Naive thymus-derived CD8-positive, alpha-beta T cell (primary cell): ENCODE measurements at regions of chr16 and their contacts with region 1.

Region 1: DNA sequence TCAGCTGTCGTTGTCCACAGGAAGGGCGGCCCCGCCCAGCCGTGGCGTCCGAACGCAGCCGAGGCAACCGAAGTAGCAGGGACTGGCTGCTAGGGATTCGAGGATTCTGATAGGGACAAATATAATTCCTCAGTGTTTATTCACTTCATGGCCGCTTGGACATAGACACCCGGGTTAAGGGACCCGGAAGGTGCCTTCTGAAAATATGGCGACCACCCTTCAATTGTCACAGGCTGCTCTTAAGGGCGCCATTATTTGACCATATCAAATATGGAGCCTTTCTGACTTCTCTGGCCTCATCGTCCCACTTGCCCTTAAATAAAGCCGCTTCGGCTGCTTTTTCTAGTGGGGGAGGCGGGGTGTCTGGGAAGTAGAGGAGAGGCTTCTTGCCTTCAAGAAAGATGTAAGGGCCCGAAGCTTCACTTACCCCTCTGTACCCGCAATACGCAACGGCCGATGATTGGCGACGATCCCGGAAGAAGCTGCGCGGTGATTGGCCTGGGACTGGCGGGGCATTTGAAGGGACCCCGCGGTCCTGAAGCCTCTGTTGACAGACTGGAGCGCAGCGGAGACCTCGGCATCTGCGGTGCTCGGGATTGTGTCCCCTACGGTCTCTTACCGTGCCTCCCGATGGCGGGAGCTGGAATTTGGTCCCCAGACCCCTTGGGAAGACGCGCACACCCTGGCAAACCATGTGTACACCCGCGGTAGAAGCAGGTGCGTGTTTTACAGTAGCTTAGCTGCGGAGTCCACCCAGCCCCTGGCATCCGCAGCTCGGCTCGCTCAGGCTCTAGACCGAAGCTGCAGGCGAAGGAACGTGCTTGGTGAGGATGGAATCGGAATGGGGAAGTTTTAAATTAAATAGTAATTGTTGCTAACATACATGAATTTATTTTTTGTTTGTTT is at the start of gene ZNF688:
- DNase-seq: peak; percentile 84 to 99 (median 96)
- ATAC-seq: peak; percentile 83 to 86
- H3K4me3 Mint-ChIP-seq: peak within 1 kb of the TSS; percentile 82 to 95 (median 92)
- H3K27ac Mint-ChIP-seq: peak within 1 kb of the TSS; percentile 93 to 99 (median 98)
- H3K4me1 Mint-ChIP-seq: peaks cover 17 to 52% (median 33%) of the 10 kb centered on the region in 4 donors
- H3K27me3 Mint-ChIP-seq: no peaks in the 10 kb centered on the region
- polyA plus RNA-seq, gene ZNF688: 21.2 to 22.0 (median 21.7) TPM

Region 2: DNA sequence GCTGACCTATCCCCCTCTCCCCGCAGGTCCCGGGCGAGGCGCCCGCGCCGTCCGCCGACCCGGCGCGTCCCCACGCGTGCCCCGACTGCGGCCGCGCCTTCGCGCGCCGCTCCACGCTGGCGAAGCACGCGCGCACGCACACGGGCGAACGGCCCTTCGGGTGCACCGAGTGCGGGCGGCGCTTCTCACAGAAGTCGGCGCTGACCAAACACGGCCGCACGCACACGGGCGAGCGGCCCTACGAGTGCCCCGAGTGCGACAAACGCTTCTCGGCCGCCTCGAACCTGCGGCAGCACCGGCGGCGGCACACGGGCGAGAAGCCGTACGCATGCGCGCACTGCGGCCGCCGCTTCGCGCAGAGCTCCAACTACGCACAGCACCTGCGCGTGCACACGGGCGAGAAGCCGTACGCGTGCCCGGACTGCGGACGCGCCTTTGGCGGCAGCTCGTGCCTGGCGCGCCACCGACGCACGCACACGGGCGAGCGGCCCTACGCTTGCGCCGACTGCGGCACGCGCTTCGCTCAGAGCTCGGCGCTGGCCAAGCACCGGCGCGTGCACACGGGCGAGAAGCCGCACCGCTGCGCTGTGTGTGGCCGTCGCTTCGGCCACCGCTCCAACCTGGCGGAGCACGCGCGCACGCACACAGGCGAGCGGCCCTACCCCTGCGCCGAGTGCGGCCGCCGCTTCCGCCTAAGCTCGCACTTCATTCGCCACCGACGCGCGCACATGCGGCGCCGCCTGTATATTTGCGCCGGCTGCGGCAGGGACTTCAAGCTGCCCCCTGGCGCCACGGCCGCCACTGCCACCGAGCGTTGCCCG is 154.2 kb before region 1 on chr16:
- POLR2A ChIA-PET with region 1: interaction called, 11 read pairs
- DNase-seq: peak; percentile 82 to 94 (median 88)
- ATAC-seq: peak; percentile 80 to 85
- H3K4me3 Mint-ChIP-seq: peak overlapping the region; percentile 22 to 83 (median 72)
- H3K27ac Mint-ChIP-seq: peak overlapping the region in 8 of 10 donors; percentile 15 to 91 (median 83)
- H3K4me1 Mint-ChIP-seq: peaks cover 8 to 17% (median 11%) of the 10 kb centered on the region in 4 donors
- H3K27me3 Mint-ChIP-seq: no peaks in the 10 kb centered on the region

Region 3: GRCh38 chr16:30526823-30527635 is 44.9 kb before region 1 on chr16:
- POLR2A ChIA-PET with region 1: interaction called, 14 read pairs
- DNase-seq: peak; percentile 64 to 92 (median 72)
- ATAC-seq: peak; percentile 71 to 82
- H3K4me3 Mint-ChIP-seq: peak overlapping the region; percentile 82 to 95 (median 90)
- H3K27ac Mint-ChIP-seq: peak overlapping the region; percentile 90 to 96 (median 94)
- H3K4me1 Mint-ChIP-seq: peaks cover 10 to 40% (median 23%) of the 10 kb centered on the region in 4 donors
- H3K27me3 Mint-ChIP-seq: no peaks in the 10 kb centered on the region

Region 4: GRCh38 chr16:30551781-30552180 is 20.2 kb before region 1 on chr16:
- POLR2A ChIA-PET with region 1: interaction called, 131 read pairs
- DNase-seq: peak in 9 of 10 donors; percentile 32 to 70 (median 54)
- ATAC-seq: peak; percentile 86 to 90
- H3K4me3 Mint-ChIP-seq: peak overlapping the region; percentile 46 to 85 (median 74)
- H3K27ac Mint-ChIP-seq: peak overlapping the region; percentile 57 to 96 (median 93)
- H3K4me1 Mint-ChIP-seq: peaks cover 18 to 55% (median 51%) of the 10 kb centered on the region in 4 donors
- H3K27me3 Mint-ChIP-seq: no peaks in the 10 kb centered on the region

Region 5: GRCh38 chr16:30585400-30586189 is 13.6 kb after region 1 on chr16 and contains the start of gene ZNF785:
- POLR2A ChIA-PET with region 1: interaction called, 38 read pairs
- DNase-seq: peak; percentile 75 to 97 (median 92)
- ATAC-seq: peak; percentile 99 to 100
- H3K4me3 Mint-ChIP-seq: peak within 1 kb of the TSS; percentile 82 to 96 (median 90)
- H3K27ac Mint-ChIP-seq: peak within 1 kb of the TSS; percentile 83 to 95 (median 92)
- H3K4me1 Mint-ChIP-seq: peaks cover 9 to 48% (median 28%) of the 10 kb centered on the region in 4 donors
- H3K27me3 Mint-ChIP-seq: peaks cover 0 to 1% (median 0%) of the 10 kb centered on the region in 5 donors
- polyA plus RNA-seq, gene ZNF785: 1.6 to 3.5 (median 3.4) TPM

Region 6: DNA sequence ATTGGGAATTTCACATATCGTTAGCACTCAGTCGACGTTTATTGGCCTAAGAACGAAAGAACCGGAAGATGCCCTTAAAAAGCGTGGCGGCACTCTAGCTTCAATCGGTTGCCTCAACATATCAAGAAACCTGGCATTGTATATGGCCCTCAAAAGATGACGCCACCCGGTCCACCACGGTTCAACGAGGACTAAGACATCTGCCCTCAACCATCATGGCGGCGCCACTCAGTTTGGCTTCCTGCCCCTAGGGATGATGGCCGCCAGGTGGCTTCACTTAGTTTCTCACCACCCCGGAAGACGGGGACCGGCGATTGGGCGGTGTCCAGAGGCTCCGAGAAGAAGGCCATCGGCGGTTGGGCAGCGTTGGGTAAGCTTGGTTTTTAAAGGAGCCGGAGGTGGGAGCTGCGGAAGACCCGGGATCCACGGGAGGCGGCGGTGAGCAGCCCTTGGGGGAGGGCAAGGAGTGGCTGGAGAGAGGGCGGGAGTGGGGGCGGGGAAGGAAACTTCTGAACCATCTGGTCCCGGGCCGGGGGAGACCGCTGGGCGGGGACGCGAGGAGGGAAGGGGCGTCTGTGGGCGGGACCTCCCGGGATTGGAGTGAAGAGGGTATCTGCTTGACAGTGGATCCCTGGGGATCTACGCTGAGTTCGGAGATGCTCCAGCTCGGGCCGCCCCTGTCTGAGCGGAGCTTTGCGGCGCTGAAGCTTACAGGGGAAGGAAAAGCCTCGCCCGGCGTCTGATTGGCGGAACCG is 78.6 kb after region 1 on chr16 and contains the start of gene PRR14:
- POLR2A ChIA-PET with region 1: interaction called, 26 read pairs
- DNase-seq: peak; percentile 87 to 99 (median 96)
- ATAC-seq: peak; percentile 87 to 90
- H3K4me3 Mint-ChIP-seq: peak within 1 kb of the TSS; percentile 97 to 100 (median 99)
- H3K27ac Mint-ChIP-seq: peak within 1 kb of the TSS; percentile 95 to 100 (median 98)
- H3K4me1 Mint-ChIP-seq: peaks cover 17 to 35% (median 29%) of the 10 kb centered on the region in 4 donors
- H3K27me3 Mint-ChIP-seq: no peaks in the 10 kb centered on the region
- polyA plus RNA-seq, gene PRR14: 13.3 to 22.3 (median 15.3) TPM

Region 7: GRCh38 chr16:30698139-30698815 is 126.3 kb after region 1 on chr16:
- POLR2A ChIA-PET with region 1: interaction called, 10 read pairs
- DNase-seq: peak; percentile 98 to 100 (median 100)
- ATAC-seq: peak; percentile 75 to 77
- H3K4me3 Mint-ChIP-seq: peak overlapping the region; percentile 93 to 98 (median 96)
- H3K27ac Mint-ChIP-seq: peak overlapping the region; percentile 99 to 100 (median 100)
- H3K4me1 Mint-ChIP-seq: peaks cover 14 to 43% (median 40%) of the 10 kb centered on the region in 4 donors
- H3K27me3 Mint-ChIP-seq: no peaks in the 10 kb centered on the region